MCF 10A (cell line): ENCODE measurements at regions of chr10 and their contacts with region 1.

Region 1: GRCh38 chr10:78029269-78030226 is at the start of gene POLR3A:
- DNase-seq: peak; percentile 95
- H3K4me3 Mint-ChIP-seq: peak within 1 kb of the TSS; percentile 95
- H3K27ac Mint-ChIP-seq: peak within 1 kb of the TSS; percentile 93
- H3K4me1 Mint-ChIP-seq: peaks cover 37% of the 10 kb centered on the region
- H3K27me3 Mint-ChIP-seq: no peaks in the 10 kb centered on the region
- CTCF ChIP-seq: peak; percentile 43
- total RNA-seq, gene POLR3A: 19.1 and 19.8 TPM in 2 replicates

Region 2: DNA sequence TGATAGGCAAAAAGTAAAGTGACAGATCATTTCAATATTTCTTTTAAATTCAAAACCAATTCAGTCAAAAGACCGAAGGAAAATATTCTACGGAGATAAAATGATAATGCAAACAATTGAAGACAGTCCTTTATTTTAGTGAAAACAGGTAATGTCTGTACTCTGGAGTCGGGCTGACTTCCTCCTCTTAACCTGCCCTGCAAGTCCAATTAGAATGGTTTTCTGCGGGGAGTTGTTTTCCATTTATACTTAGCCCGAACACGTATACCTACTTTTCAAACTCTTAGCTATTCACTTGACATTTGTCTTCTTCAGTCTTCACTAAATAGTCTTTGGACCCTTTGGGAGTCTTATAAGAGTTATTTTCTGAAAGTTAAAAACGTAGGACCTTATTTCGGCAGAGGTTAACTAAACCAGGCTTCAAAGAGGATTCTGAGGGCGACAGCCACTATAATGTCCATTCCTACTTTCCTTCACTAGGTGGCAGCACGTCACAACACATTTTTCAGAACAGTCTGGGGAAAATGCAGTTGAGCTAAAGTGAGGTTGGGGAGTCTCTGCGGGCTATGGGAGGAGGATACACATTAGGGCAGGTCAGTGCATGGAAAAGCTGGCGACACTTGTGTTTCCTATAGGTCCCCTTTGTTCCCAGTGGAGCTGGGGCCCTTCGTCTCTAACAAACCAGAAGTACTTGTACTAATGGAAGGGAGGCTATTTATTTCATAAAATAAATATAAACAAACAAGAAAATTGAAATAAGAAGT is 863.9 kb before region 1 on chr10:
- CTCF ChIA-PET with region 1: interaction called, 3 read pairs
- POLR2A ChIA-PET with region 1: interaction called, 3 read pairs
- intact Hi-C with region 1: loop called (anchors 10 kb)
- DNase-seq: peak; percentile 79
- H3K4me3 Mint-ChIP-seq: no peak overlapping the region
- H3K27ac Mint-ChIP-seq: peak overlapping the region; percentile 81
- H3K4me1 Mint-ChIP-seq: peaks cover 37% of the 10 kb centered on the region
- H3K27me3 Mint-ChIP-seq: no peaks in the 10 kb centered on the region
- CTCF ChIP-seq: peak; percentile 77

Region 3: GRCh38 chr10:77949167-77949566 is 80.4 kb before region 1 on chr10:
- CTCF ChIA-PET with region 1: no interaction called
- POLR2A ChIA-PET with region 1: no interaction called
- intact Hi-C with region 1: no loop called
- DNase-seq: peak; percentile 96
- H3K4me3 Mint-ChIP-seq: no peak overlapping the region
- H3K27ac Mint-ChIP-seq: peak overlapping the region; percentile 11
- H3K4me1 Mint-ChIP-seq: peaks cover 34% of the 10 kb centered on the region
- H3K27me3 Mint-ChIP-seq: no peaks in the 10 kb centered on the region
- CTCF ChIP-seq: no peak

Region 4: GRCh38 chr10:78688901-78689583 is 659.5 kb after region 1 on chr10:
- CTCF ChIA-PET with region 1: no interaction called
- POLR2A ChIA-PET with region 1: no interaction called
- intact Hi-C with region 1: no loop called
- DNase-seq: no peak
- H3K4me3 Mint-ChIP-seq: no peak overlapping the region
- H3K27ac Mint-ChIP-seq: no peak overlapping the region
- H3K4me1 Mint-ChIP-seq: no peaks in the 10 kb centered on the region
- H3K27me3 Mint-ChIP-seq: peaks cover 10% of the 10 kb centered on the region
- CTCF ChIP-seq: no peak